ENCODE measurements at regions of chr2 and their contacts with region 1.

Region 1: DNA sequence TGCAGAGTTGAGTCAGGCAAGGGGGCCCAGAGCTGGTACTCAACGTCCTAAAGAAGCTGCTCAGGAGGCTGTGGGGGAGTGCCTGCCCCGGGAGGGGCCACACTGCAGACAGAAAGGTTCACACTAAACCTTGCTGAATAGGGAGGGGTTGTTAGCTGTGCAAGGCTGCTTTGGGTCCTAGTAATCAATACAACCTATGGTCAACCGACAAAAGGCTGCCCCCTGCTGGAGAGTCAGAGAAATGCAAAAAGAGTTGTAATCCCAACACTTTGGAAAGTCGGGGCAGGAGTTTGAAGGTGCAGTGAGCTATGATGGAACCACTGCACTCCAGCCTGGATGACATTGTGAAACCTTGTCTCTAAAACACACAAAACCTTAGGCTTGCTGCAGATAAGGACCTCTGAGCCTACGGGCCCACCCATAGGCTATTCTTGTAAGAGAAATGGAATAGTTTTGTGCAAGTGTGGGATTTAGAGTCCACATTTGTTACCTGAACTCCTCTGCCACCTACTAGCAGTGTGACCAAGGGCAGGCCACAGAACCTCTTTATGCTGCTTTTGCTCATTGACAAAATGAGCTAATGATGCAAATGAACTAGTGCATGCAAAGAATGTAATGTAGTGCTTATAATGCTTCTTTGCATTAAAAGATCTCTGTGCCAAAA is 81.5 kb downstream of the PRPF40A start:
- DNase-seq: peak in 2 of 3 donors; percentile 45 to 78
- ATAC-seq: peak; percentile 85
- H3K4me3 ChIP-seq: no peak overlapping the region
- H3K4me1 ChIP-seq: no peaks in the 10 kb centered on the region
- CTCF ChIP-seq: peak; percentile 60

Region 2: DNA sequence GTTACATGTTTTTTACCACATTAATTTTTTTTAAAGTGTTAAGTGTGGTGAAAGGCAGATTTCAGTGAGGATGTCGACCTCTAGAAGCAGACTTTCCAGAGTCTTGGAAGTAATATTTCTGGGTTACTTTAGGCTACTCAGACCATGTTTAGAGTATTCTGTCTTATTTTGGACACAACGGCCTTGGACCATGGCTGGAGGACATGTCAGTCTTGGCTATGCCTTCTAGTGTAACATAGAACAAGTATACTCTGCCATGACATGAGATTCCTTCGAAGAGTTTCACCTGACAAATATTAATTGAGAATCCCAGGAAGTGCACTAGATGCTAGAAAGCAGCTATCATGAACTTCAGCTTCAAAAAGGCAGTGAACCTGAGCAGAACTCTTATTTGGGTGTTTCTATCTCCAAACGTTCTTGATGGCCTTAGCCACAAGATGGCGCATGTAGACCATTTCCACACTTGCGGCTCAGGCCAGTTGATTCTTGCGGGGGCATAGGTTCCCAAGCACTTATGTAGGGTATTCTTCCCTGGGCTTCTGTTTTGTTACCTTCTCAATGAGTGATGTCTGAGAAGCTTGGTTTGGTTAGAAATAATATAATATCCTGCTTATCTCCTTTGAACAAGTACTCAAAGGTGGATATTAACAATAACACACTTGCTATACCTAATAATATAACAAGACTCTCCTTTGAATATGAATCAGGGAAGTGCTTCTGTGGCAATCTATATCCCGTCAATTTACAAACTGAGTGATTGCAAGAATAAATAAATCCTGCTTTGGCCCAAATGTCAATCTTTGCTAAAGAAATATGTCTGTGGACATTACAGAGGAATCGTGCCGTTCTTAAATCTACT is 598.9 kb before region 1 on chr2:
- intact Hi-C with region 1: loop called in 1 of 2 experiments (anchors 10 kb)
- DNase-seq: peak in 2 of 3 donors; percentile 41 to 87
- ATAC-seq: peak; percentile 60
- H3K4me3 ChIP-seq: no peak overlapping the region
- H3K4me1 ChIP-seq: peaks cover 11% of the 10 kb centered on the region
- CTCF ChIP-seq: peak; percentile 50

Region 3: DNA sequence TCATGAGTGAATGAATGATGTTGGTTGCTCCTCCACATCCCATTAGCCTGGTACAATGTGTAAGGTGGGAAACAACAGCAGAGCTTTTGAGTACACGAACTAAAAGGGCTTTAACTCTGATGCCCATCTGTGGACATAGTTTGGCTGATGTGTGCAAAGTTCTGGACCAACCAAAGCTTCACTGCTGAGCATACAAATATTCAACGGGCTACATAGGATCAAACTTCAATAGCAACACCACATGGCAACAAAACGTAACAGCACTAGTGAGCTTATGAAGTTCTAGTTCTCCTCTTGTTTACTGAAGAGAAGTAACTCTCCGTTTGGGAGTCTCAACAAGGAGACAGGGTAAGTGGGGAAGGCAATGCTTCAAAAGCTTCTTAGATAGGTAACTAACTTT is 480.6 kb before region 1 on chr2:
- intact Hi-C with region 1: no loop called
- DNase-seq: no peak
- ATAC-seq: no peak
- H3K4me3 ChIP-seq: no peak overlapping the region
- H3K4me1 ChIP-seq: no peaks in the 10 kb centered on the region
- CTCF ChIP-seq: no peak

Region 4: DNA sequence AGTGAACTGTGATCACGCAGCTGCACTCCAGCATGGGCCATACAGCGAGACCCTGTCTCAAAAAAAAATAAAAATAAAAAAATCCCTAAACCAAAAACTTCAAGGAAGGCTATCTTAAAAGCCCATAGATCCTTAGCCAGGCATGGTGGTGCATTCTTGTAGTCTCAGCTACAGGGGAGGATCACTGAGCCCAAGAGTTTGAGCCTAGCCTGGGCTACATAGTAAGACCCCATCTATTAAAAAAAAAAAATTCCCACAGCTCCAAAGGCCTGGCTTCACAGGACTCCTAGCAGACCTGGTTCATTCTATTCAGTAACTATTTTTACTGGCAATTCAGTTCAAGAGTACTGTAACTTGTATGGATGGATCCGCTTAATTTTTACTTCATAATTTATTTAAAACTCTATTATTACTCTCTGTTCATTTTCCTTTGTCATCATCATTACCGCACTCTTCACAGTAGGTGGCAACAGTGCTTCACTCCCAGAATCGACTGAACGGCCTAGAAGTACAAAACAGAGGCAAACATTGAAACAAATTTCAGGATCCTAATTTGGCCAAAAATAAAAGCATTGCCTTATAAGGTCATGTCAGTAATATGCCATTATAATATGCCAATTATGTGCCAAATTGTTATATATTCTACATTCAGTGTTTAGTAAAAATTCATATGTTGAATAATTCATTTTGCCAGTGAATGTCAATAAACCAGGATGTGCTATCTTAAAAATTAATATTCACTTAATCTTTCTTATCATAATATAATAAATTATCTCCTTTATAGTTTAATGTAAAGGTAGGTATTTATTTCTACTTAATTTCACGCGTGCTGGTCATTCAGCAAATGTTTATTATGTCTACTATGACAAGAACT is 445.9 kb before region 1 on chr2:
- intact Hi-C with region 1: loop called (anchors 5 kb)
- DNase-seq: peak in 1 of 3 donors; percentile 49
- ATAC-seq: peak; percentile 69
- H3K4me3 ChIP-seq: no peak overlapping the region
- H3K4me1 ChIP-seq: no peaks in the 10 kb centered on the region
- CTCF ChIP-seq: peak; percentile 45

Region 5: GRCh38 chr2:152335010-152335725 is 300.6 kb before region 1 on chr2 and contains the start of gene FMNL2:
- intact Hi-C with region 1: loop called in 1 of 2 experiments (anchors 10 kb)
- DNase-seq: peak; percentile 86 to 91 (median 88)
- ATAC-seq: peak; percentile 89
- H3K4me3 ChIP-seq: peak within 1 kb of the TSS; percentile 79
- H3K4me1 ChIP-seq: no peaks in the 10 kb centered on the region
- CTCF ChIP-seq: no peak
- total RNA-seq, gene FMNL2: 11.5 to 25.4 (median 12.0) TPM

Region 6: DNA sequence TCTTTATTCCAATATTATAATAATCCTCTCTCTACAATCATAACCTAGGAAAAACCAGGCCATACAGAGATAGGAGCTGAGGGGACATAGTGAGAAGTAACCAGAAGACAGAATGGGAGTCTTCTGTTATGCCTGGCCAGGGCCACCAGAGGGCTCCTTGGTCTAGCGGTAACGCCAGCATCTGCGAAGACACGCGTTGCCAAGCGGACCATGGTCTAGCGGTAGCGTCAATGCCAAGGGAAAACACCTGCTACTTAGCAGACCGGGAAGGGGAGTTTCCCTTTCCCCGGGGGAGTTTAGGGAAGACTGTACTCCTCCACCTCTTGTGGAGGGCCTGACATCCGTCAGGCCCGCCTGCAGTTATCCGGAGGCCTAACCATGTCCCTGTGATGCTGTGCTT is 119.3 kb after region 1 on chr2:
- intact Hi-C with region 1: no loop called
- DNase-seq: no peak
- ATAC-seq: no peak
- H3K4me3 ChIP-seq: no peak overlapping the region
- H3K4me1 ChIP-seq: no peaks in the 10 kb centered on the region
- CTCF ChIP-seq: no peak